Heart left ventricle (tissue), 16 donors: ENCODE measurements at regions of chr3 and their contacts with region 1.

Region 1: DNA sequence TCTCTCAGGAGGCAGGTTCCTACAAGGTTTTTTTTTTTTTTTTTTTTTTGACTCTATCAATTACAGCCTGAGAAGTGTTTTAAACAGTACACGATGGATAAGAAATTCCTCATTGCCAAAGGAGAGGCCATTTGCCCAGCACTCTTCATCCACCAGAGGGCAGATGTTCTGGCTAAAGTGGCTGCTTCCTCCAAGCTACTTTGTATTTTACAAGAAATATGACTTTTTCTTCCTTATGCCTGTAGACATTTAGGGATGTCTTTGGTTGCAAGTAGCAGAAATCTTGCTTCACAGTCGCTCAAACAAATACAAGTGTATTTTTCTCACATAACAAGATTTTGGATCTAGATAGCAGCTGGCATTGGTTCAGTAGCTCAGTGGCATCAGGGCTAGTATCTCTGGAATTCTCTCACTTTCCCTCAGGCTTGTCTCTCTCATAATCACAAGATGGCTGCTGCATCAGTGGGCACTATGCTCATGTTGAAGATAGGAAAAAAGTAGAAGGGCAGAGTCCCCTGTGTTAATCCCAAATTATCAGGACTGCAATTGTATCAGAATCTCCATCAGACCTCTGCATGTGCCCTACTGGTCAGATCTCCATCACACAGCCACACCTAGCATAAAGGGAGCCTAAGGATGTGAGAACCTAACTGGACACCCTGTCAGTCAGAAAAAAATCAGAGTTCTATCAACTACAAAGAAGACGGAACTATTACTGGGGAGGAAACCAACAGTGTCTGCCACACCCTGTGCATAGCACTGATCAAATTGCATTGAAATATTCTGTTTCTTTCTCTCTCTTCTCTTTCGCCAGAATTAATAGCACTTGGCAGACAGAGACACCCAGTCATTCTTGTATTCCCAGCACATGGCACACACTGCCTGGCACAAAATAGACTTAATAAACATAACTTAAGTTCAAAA is 138.9 kb upstream of the COL8A1 start:
- DNase-seq: peak in 4 of 5 donors; percentile 36 to 46 (median 40)
- ATAC-seq: peak; percentile 22 to 69 (median 66)
- H3K4me3 ChIP-seq: no peak overlapping the region
- H3K27ac ChIP-seq: peak overlapping the region in 5 of 12 donors; percentile 2 to 44 (median 32)
- H3K4me1 ChIP-seq: peaks cover 0 to 51% (median 25%) of the 10 kb centered on the region in 12 donors
- H3K27me3 ChIP-seq: no peaks in the 10 kb centered on the region
- CTCF ChIP-seq: peak; percentile 60 to 85 (median 76)
- POLR2A ChIP-seq: no peak

Region 2: DNA sequence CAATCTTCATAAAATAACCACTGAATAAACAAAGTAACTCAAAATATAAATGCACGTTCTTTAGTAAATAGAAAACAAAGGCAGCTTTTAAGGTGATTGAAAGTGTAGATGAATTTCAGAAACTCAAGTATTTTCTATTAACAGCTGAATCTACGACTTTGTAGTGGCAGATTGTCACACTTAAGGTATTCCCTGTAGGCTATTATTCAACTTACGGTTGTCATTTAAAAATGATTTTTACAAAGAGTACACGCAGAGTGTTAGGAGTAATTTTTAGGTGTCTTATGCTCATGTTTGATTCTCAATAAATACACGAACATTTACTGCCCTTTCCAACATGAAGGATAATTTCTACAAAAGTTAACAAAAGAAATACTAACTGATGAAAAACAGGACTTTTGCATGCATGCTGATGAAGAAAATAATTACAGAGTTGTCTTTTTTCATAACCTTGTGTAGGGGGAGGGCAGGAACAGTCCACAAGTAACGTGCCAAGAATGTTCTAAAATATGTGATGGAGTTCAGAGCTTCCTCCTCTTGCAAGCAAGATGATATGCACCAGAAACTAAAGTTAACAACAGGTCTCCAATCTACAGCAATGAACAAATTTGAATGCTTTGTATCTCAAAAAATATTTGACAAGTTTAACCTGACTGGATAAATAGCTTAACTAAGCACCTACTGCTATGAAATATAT is 614.7 kb before region 1 on chr3:
- intact Hi-C with region 1: no loop called
- DNase-seq: no peak
- ATAC-seq: peak; percentile 53 to 74 (median 66)
- H3K4me3 ChIP-seq: peak overlapping the region in 2 of 12 donors; percentile 3 to 7
- H3K27ac ChIP-seq: peak overlapping the region in 5 of 12 donors; percentile 50 to 63 (median 61)
- H3K4me1 ChIP-seq: peaks cover 0 to 61% (median 41%) of the 10 kb centered on the region in 12 donors
- H3K27me3 ChIP-seq: no peaks in the 10 kb centered on the region
- CTCF ChIP-seq: no peak
- POLR2A ChIP-seq: no peak

Region 3: DNA sequence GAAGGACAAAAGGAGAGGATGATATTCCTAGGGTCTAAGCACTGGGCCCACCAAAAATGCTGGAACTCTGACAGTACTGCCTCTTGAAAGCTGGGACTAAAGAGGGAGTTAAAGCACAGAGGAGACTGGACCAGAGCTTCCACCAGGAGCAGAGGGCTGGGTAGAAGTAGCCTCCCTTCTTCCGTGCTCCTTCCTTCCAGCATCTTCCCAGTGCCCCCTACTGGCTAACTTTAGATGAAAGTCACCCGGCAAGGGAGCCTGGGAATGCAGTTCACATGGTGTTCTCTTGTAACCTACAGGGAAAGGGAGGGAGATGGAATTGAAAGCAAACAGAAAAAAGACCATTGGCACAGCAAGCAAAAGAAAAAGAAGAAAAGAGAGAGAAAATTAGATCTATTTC is 32.7 kb after region 1 on chr3:
- intact Hi-C with region 1: loop called in 4 of 10 experiments (anchors 5 kb)
- DNase-seq: peak in 2 of 5 donors; percentile 39 to 41
- ATAC-seq: peak in 3 of 4 donors; percentile 61 to 81 (median 74)
- H3K4me3 ChIP-seq: no peak overlapping the region
- H3K27ac ChIP-seq: no peak overlapping the region
- H3K4me1 ChIP-seq: peaks cover 0 to 12% (median 0%) of the 10 kb centered on the region in 12 donors
- H3K27me3 ChIP-seq: no peaks in the 10 kb centered on the region
- CTCF ChIP-seq: peak; percentile 30 to 65 (median 46)
- POLR2A ChIP-seq: no peak

Region 4: GRCh38 chr3:99551520-99551919 is 52.0 kb after region 1 on chr3:
- intact Hi-C with region 1: loop called in 4 of 10 experiments (anchors 5 kb)
- DNase-seq: no peak
- ATAC-seq: peak; percentile 63 to 75 (median 67)
- H3K4me3 ChIP-seq: no peak overlapping the region
- H3K27ac ChIP-seq: peak overlapping the region in 7 of 12 donors; percentile 62 to 80 (median 66)
- H3K4me1 ChIP-seq: peaks cover 0 to 49% (median 20%) of the 10 kb centered on the region in 12 donors
- H3K27me3 ChIP-seq: no peaks in the 10 kb centered on the region
- CTCF ChIP-seq: peak in 3 of 12 donors; percentile 12 to 17 (median 16)
- POLR2A ChIP-seq: no peak

Region 5: DNA sequence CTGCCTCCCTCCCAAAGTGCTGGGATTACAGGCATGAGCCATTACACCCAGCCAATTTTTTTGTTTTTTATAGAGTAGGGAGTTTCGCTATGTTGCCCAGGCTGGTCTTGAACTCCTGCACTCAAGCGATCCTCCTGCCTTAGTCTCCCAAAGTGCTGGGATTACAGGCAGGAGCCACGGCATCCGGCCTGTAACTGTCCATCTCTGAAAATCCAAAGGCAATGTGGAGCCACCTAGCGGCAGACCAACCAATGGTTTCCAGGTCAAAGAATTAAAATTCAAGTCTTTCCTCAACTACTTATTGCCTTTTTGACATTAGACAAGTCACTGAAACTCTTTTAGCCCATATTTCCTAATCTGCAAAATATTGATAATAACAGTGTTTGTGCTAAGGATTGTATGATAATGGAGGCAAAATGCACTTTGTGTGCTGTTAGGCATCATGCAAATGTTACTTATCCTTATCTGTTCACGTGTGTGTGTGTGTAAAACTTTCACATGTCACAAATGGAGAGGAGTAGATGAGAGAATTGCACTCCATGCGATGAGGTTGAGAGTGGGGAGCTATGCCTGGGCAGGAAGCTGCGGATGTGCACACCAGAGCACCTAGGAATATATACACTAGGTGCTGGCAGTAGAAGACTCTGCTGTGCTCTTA is 187.6 kb after region 1 on chr3:
- intact Hi-C with region 1: loop called (anchors 1 to 10 kb)
- DNase-seq: peak; percentile 48 to 60 (median 52)
- ATAC-seq: peak in 3 of 4 donors; percentile 44 to 66 (median 45)
- H3K4me3 ChIP-seq: no peak overlapping the region
- H3K27ac ChIP-seq: no peak overlapping the region
- H3K4me1 ChIP-seq: peaks cover 0 to 20% (median 2%) of the 10 kb centered on the region in 12 donors
- H3K27me3 ChIP-seq: no peaks in the 10 kb centered on the region
- CTCF ChIP-seq: peak; percentile 58 to 79 (median 70)
- POLR2A ChIP-seq: no peak

Region 6: DNA sequence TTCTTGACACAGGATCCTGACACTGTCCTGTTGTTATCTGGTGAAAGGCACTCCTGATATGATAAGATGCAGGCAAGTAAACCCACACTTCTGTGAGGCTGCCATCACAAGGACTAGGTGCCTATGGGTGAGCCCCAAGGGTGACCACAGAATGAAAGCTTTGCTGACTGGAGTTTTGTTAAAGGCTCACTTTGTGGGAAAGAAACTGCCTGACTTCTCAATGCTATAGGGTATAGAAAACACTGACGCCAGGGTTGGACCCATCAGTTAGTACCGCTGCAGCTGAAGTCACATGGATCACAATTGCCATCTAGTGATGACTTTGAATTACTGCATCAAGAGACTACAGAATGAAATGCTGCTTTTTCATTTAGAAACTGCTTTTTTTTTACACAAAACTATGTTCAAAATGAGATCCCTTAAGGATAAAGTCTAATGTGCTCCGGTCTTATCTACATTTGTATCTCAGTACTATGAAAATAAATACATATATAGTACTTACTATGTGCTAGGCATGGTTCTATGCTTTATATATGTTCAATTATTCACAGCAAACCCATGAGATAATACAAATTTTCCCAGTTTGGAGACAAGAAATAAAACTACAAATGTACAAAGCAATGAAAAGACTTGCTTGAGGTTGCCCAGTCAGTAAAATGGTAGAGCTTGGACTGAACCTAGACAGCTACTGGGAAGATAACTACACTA is 253.9 kb after region 1 on chr3:
- intact Hi-C with region 1: loop called (anchors 2 to 10 kb)
- DNase-seq: peak in 2 of 5 donors; percentile 15 to 27
- ATAC-seq: peak; percentile 69 to 86 (median 77)
- H3K4me3 ChIP-seq: no peak overlapping the region
- H3K27ac ChIP-seq: no peak overlapping the region
- H3K4me1 ChIP-seq: peaks cover 0 to 20% (median 1%) of the 10 kb centered on the region in 12 donors
- H3K27me3 ChIP-seq: no peaks in the 10 kb centered on the region
- CTCF ChIP-seq: peak; percentile 57 to 82 (median 71)
- POLR2A ChIP-seq: no peak